ENCODE measurements at regions of chr1 and their contacts with region 1.

Region 1: DNA sequence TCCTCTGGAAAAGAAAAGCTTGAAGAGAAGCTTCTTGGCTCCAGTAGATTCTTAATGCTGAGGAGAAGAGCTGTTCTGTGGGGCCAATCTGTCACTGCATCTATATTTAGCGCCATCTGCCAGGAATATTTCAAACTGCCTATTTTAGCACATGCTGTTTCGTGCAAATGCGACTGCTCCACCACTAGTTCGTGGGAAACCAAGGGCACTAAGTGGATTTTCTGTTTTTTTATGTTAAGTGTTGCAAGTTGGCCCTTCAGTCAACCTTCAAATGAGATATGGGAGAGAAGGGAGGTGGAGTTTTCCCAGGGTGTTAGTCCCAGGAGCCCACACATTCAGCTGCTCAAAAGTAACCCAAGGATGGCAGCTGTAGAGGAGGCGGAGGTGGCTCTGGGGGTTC is 91.9 kb downstream of the TSEN15 start:
- DNase-seq: no peak
- H3K4me3 Mint-ChIP-seq: no peak overlapping the region
- H3K27ac Mint-ChIP-seq: no peak overlapping the region
- H3K4me1 Mint-ChIP-seq: no peaks in the 10 kb centered on the region
- H3K27me3 Mint-ChIP-seq: peaks cover 22% of the 10 kb centered on the region

Region 2: GRCh38 chr1:184101141-184101540 is 42.3 kb before region 1 on chr1:
- CTCF ChIA-PET with region 1: no interaction called
- intact Hi-C with region 1: no loop called
- DNase-seq: no peak
- H3K4me3 Mint-ChIP-seq: no peak overlapping the region
- H3K27ac Mint-ChIP-seq: no peak overlapping the region
- H3K4me1 Mint-ChIP-seq: no peaks in the 10 kb centered on the region
- H3K27me3 Mint-ChIP-seq: no peaks in the 10 kb centered on the region

Region 3: DNA sequence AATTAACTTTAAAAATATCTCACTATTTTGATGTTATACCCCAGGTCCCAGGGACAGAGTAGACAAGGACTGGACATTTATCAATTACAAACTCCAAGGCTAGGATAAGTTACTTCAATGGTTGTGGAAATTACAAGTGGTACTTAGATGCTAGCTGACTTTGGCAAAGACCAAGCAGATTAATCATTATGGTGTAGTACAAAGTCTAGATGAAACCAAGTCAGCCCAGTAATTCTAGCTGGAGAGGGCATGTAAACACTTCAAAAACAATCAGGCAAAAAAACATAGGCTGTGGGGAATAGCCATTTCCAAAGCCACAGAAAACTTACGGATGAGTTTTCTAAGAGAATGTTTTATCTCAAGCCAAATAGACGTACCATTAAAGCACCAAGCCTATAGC is 32.6 kb after region 1 on chr1:
- CTCF ChIA-PET with region 1: no interaction called
- intact Hi-C with region 1: loop called (anchors 5 kb)
- DNase-seq: no peak
- H3K4me3 Mint-ChIP-seq: no peak overlapping the region
- H3K27ac Mint-ChIP-seq: no peak overlapping the region
- H3K4me1 Mint-ChIP-seq: no peaks in the 10 kb centered on the region
- H3K27me3 Mint-ChIP-seq: no peaks in the 10 kb centered on the region